CD14-positive monocyte (primary cell): ENCODE measurements at regions of chr9 and their contacts with region 1.

Region 1: DNA sequence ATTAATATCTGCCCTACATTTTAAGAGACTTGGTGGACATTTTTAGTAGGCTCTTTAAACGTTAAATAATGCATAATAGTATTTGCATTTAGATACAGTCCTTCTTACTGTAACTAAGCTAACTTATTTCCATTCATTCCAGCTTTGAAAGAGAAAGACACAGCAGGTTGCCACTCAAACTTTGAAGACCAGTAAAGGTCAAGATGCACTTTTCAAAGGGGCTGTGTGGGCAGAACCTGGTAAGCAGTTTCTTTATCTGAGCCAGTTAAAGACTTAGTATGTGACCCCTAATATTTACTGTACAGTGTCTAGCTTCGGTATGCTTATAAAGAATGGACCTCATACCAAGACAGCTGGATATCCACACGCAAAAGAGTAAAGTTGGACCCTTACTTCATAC is 20.8 kb downstream of the PLGRKT start:
- DNase-seq: no peak
- H3K4me3 ChIP-seq: no peak overlapping the region
- H3K4me3 Mint-ChIP-seq: no peak overlapping the region
- H3K27ac ChIP-seq: no peak overlapping the region
- H3K27ac Mint-ChIP-seq: no peak overlapping the region
- H3K4me1 ChIP-seq: no peaks in the 10 kb centered on the region
- H3K4me1 Mint-ChIP-seq: peaks cover 3% of the 10 kb centered on the region
- H3K27me3 ChIP-seq: no peaks in the 10 kb centered on the region
- H3K27me3 Mint-ChIP-seq: peaks cover 0 to 1% (median 0%) of the 10 kb centered on the region in 3 donors
- CTCF ChIP-seq: no peak

Region 2: DNA sequence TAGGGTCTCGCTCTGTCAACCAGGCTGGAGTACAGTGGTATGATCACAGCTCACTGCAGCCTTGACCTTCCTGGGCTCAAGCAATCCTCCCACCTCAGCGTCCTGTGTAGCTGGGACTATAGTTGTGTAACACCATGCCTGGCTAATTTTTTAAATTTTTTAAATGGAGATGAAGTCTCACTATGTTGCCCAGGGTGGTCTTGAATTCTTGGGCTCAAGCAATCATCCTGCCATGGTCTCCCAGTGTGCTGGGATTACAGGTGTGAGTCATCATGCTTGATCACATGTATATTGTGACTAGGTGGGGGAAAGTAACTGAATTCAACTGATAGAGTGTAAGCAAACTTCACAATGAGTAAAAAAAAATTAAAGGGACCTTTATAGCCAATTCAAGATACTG is 11.8 kb after region 1 on chr9:
- intact Hi-C with region 1: loop called in 1 of 2 experiments (anchors 1 kb)
- DNase-seq: no peak
- H3K4me3 ChIP-seq: no peak overlapping the region
- H3K4me3 Mint-ChIP-seq: no peak overlapping the region
- H3K27ac ChIP-seq: no peak overlapping the region
- H3K27ac Mint-ChIP-seq: no peak overlapping the region
- H3K4me1 ChIP-seq: no peaks in the 10 kb centered on the region
- H3K4me1 Mint-ChIP-seq: no peaks in the 10 kb centered on the region
- H3K27me3 ChIP-seq: no peaks in the 10 kb centered on the region
- H3K27me3 Mint-ChIP-seq: no peaks in the 10 kb centered on the region
- CTCF ChIP-seq: no peak